ENCODE measurements at regions of chr10 and their contacts with region 1.

Region 1: DNA sequence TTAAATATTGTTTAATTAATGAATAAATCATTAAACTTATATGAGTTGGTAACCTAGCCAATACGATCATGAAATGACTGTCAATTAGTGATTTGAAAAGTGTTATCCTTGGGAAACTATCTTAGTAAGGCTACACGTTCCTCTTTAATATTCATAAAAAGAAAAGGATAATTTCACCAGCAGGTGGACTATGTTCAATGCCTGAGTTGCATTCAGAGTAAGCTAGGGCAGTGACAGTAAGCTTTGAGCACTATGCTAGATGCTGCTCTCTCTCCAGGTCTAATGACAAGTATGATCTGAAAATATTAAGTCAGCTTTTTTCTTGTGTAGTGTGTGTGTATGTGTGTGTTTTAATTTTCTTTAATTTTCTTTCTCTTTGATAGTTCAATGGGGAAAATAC is 486.3 kb upstream of the PCDH15 start:
- DNase-seq: peak; percentile 47
- ATAC-seq: peak; percentile 95
- H3K4me3 ChIP-seq: no peak overlapping the region
- H3K27ac ChIP-seq: no peak overlapping the region
- H3K4me1 ChIP-seq: no peaks in the 10 kb centered on the region
- H3K27me3 ChIP-seq: no peaks in the 10 kb centered on the region
- CTCF ChIP-seq: peak; percentile 58

Region 2: DNA sequence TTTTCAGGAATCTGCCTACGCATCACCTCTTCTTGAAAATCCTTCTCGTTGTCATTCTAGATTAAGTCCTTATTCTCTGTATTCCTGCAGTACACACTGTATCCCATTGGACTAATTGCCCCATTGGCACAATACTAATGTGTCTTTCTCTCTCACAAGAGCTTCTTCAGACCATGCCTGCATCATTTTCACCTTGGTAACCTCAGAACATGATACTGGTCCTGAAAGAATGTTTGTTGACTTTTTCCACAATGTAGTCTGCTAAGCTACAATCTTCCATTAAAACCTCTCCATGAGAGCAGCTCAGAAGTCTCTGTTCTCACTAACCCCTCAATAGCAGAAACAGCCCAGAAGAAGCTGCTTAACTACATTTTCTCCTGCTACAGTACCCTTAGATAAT is 757.0 kb before region 1 on chr10:
- CTCF ChIA-PET with region 1: no interaction called
- POLR2A ChIA-PET with region 1: no interaction called
- intact Hi-C with region 1: no loop called
- DNase-seq: no peak
- ATAC-seq: no peak
- H3K4me3 ChIP-seq: no peak overlapping the region
- H3K27ac ChIP-seq: no peak overlapping the region
- H3K4me1 ChIP-seq: no peaks in the 10 kb centered on the region
- H3K27me3 ChIP-seq: no peaks in the 10 kb centered on the region
- CTCF ChIP-seq: no peak

Region 3: DNA sequence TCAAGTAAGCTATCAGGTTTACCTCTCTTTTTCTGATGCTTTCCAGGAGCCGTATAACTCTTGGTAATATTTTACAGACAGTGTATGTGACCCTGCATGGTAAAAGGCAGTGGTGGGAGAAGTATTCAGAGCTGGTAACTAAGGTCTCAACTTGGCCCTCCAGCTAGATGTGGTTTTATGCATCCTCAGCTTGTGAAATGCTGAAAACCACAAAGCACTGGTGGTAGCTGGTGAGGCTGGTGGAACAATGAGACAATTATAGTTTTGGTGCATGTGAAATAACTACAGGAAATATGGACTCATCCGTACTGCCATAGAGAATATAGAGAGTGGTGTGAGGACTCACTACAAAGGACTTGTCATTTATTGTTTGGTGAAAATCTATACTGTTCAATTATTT is 103.4 kb before region 1 on chr10:
- CTCF ChIA-PET with region 1: no interaction called
- POLR2A ChIA-PET with region 1: no interaction called
- intact Hi-C with region 1: no loop called
- DNase-seq: peak; percentile 38
- ATAC-seq: peak; percentile 89
- H3K4me3 ChIP-seq: no peak overlapping the region
- H3K27ac ChIP-seq: no peak overlapping the region
- H3K4me1 ChIP-seq: no peaks in the 10 kb centered on the region
- H3K27me3 ChIP-seq: no peaks in the 10 kb centered on the region
- CTCF ChIP-seq: no peak

Region 4: DNA sequence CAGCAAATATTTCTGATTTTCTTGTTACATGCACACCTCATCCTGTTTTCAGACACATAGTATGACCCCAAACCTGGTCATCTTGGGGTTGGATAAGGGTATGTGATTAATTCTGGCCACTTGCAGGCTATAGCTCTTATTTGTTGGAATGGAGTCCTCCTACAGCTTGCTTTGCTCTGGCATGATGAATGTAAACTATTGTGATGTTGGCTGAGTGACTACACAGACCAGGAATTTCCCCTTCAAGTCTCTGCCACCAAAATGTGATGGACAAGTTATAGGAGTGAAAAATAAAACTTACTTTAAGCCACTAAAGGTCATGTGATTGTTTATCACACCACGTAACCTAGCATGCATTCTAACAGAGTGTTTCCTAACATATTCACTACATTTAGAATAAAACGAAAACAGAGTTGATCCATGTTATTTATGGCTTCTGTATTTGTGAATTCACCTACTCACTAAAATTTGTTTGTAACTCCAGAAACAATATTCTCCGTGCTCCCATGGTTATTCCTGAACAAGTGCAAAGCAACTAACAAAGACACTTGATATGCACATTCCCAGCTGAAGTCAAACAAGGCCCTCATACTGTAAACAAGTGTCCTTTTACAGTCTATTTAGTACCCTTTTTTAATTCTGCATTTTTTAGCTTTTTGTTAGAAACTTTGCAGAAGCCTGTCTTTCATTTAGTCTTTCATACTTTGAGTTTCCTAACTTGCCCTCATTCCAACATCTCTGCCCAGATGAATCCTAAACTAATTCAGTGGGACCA is 112.9 kb after region 1 on chr10:
- CTCF ChIA-PET with region 1: interaction called, 6 read pairs
- POLR2A ChIA-PET with region 1: no interaction called
- intact Hi-C with region 1: loop called (anchors 1 kb)
- DNase-seq: peak; percentile 36
- ATAC-seq: peak; percentile 90
- H3K4me3 ChIP-seq: no peak overlapping the region
- H3K27ac ChIP-seq: no peak overlapping the region
- H3K4me1 ChIP-seq: no peaks in the 10 kb centered on the region
- H3K27me3 ChIP-seq: no peaks in the 10 kb centered on the region
- CTCF ChIP-seq: no peak

Region 5: GRCh38 chr10:55500932-55501559 is 213.7 kb after region 1 on chr10:
- CTCF ChIA-PET with region 1: no interaction called
- POLR2A ChIA-PET with region 1: no interaction called
- intact Hi-C with region 1: loop called (anchors 1 kb)
- DNase-seq: peak; percentile 72
- ATAC-seq: peak; percentile 88
- H3K4me3 ChIP-seq: no peak overlapping the region
- H3K27ac ChIP-seq: no peak overlapping the region
- H3K4me1 ChIP-seq: no peaks in the 10 kb centered on the region
- H3K27me3 ChIP-seq: no peaks in the 10 kb centered on the region
- CTCF ChIP-seq: peak; percentile 90

Region 6: DNA sequence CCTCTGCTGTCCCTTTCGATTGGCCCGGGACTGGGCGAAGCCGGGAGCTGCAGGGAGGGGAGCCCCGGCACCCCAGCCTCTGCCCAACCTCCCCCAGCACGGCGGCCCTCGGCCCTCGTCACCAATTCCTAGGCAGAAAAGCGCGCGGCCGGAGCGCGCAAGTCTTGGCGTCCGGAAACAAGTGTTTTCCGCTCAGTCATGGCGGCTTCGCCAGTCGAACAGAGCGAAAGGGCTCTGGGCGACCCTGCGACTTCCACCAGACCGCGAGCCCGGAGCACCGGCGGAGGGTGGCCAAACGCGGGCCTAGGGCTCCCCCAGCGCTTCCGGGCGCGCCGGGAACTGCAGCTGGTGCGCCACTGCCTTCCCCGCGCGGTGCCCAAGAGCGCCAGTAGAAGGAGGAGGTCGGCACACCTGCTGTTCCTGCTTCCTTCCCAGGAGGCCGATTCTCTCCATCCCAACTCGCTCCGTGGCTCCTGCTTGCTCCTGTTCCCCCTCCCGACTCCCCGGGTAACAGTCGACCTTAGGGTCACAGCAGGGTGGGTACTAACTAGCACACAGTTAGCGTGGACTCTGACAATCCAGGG is 343.8 kb after region 1 on chr10:
- CTCF ChIA-PET with region 1: interaction called, 4 read pairs
- POLR2A ChIA-PET with region 1: no interaction called
- intact Hi-C with region 1: loop called (anchors 1 kb)
- DNase-seq: peak; percentile 86
- ATAC-seq: peak; percentile 89
- H3K4me3 ChIP-seq: peak overlapping the region; percentile 80
- H3K27ac ChIP-seq: no peak overlapping the region
- H3K4me1 ChIP-seq: peaks cover 13% of the 10 kb centered on the region
- H3K27me3 ChIP-seq: peaks cover 13% of the 10 kb centered on the region
- CTCF ChIP-seq: peak; percentile 91

Region 7: DNA sequence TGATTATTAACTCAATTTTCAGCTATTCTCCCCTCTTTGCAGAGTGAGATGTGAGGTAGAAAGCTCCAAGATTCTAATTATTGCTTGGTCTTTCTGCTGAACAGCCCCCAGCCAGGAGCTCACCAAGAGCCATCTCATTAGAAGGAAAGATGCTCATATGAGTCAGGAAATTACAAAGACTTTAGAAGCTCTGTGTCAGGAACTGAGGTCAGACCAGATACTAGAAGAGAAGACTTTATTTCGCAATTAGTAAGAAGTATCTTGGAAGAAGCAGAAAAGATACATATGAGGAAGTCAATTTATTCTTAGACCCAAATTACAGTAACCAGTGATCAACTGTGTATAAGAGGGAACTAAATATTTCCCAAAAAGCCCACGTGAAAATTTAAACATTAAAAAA is 446.8 kb after region 1 on chr10:
- CTCF ChIA-PET with region 1: no interaction called
- POLR2A ChIA-PET with region 1: no interaction called
- intact Hi-C with region 1: loop called (anchors 5 kb)
- DNase-seq: no peak
- ATAC-seq: no peak
- H3K4me3 ChIP-seq: no peak overlapping the region
- H3K27ac ChIP-seq: no peak overlapping the region
- H3K4me1 ChIP-seq: no peaks in the 10 kb centered on the region
- H3K27me3 ChIP-seq: no peaks in the 10 kb centered on the region
- CTCF ChIP-seq: no peak

Measured in PC-3 (cell line).